CD4-positive, alpha-beta memory T cell (primary cell): ENCODE measurements at regions of chr11 and their contacts with region 1.

Region 1: DNA sequence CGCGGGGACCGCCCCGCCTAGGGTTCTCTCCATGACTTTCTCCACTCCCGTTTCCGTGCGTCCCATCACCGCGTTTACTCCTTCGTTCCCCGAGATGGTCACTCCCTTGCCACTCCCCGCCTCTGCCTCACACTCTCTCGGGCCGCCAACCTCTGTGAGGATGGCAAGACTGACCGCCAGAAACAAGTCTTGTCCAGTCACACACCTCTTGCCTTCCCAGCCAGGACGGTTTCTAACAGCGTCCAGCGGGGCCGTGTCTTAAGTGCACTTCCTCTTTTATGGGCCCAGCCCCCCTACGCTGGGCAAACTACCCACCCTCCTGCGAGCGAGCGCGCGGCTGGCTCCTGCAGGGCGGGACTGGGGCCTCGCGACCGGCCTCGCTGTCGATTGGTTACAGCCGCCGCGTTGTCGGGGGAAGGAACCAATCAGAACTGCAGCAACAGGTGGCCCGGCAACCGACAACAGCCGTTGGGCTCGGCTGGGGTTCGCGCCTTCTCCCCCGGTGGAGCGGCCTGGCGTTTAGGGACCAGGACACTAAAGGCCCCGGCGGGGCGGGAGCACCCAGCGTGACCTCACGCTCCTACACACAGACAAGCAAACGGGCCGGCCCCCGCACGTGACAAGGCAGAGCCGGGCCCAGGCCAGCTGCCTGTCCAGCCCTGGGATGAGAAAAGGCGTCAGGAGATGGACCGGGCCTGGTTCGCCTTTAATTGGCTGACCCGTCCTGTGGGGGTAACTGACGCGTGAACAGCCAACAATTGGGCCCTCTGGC is 512 bp upstream of the UCP2 start:
- DNase-seq: peak; percentile 91 to 95 (median 93)
- H3K4me3 ChIP-seq: peak overlapping the region; percentile 87 to 99
- H3K4me3 Mint-ChIP-seq: peak overlapping the region; percentile 96 to 99 (median 99)
- H3K27ac ChIP-seq: peak overlapping the region; percentile 84
- H3K27ac Mint-ChIP-seq: peak overlapping the region; percentile 98 to 100 (median 99)
- H3K4me1 ChIP-seq: peaks cover 42% of the 10 kb centered on the region
- H3K4me1 Mint-ChIP-seq: peaks cover 19 to 70% (median 29%) of the 10 kb centered on the region in 4 donors
- H3K27me3 ChIP-seq: no peaks in the 10 kb centered on the region
- H3K27me3 Mint-ChIP-seq: no peaks in the 10 kb centered on the region

Region 2: DNA sequence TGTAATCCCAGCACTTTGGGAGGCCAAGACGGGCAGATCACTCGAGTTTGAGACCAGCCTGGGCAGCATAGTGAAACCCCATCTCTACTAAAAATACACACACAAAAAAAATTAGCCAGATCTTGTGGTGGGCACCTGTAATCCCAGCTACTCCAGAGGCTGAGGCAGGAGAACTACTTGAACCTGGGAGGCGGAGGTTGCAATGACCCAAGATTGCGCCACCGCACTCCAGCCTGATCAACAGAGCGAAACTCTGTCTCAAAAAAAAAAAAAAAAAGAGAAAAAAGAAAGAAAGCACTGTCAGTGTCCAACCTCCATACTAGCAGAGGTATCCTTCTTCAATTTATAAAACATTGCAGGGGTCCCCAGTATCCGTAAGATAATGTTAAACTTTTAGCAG is 240.1 kb before region 1 on chr11:
- CTCF ChIA-PET with region 1: no interaction called
- POLR2A ChIA-PET with region 1: no interaction called
- intact Hi-C with region 1: no loop called
- DNase-seq: no peak
- H3K4me3 ChIP-seq: no peak overlapping the region
- H3K4me3 Mint-ChIP-seq: no peak overlapping the region
- H3K27ac ChIP-seq: no peak overlapping the region
- H3K27ac Mint-ChIP-seq: peak overlapping the region in 1 of 7 donors; percentile 54
- H3K4me1 ChIP-seq: peaks cover 3% of the 10 kb centered on the region
- H3K4me1 Mint-ChIP-seq: peaks cover 13 to 23% (median 20%) of the 10 kb centered on the region in 4 donors
- H3K27me3 ChIP-seq: no peaks in the 10 kb centered on the region
- H3K27me3 Mint-ChIP-seq: no peaks in the 10 kb centered on the region

Region 3: DNA sequence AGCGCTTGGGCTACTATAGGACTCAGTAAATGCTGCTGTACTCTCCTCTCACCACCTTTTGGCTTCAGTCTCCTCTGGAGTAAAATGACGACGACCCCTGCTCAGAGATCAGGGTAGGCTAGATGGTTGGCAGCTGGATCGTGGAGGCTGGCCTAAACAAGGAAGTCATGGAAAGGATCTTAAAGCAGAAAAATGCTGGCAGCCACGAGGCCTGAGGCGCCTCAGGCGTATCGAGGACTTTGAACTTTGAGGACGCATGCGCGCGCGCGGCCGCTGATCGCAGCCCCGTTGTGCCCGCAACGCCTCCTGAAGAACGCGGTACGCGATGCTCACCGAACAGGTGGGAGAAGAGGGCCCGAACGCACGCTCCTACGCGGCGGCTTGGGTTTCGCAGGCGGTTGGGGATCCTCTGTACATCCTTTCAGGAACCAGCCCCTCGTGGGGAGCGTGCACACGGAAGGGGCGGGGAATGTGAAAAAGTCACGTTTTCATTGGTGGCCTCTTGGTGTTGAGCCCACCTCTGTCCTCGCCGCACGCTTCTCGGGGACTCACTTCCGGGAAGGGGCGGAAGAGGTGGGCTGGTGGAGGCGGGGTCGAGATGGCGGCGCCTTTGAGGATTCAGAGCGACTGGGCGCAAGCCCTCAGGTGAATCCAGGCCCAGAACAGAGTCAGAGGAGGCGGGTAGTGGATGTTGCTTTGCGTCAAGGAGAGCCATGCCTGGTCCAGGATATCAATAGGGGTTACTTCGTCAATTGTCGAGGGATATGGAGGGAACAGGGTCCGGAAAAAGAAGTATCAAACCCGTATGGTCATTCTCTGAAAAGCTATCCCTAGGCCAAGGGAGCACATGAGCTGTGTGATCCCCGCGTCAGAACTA is 106.5 kb before region 1 on chr11 and contains the starts of genes COA4 and PAAF1:
- CTCF ChIA-PET with region 1: no interaction called
- POLR2A ChIA-PET with region 1: no interaction called
- intact Hi-C with region 1: loop called (anchors 5 kb)
- DNase-seq: peak; percentile 93 to 97 (median 94)
- H3K4me3 ChIP-seq: peak within 1 kb of the TSS; percentile 85 to 90
- H3K4me3 Mint-ChIP-seq: peak within 1 kb of the TSS; percentile 98 to 100 (median 100)
- H3K27ac ChIP-seq: peak within 1 kb of the TSS; percentile 86
- H3K27ac Mint-ChIP-seq: peak within 1 kb of the TSS; percentile 95 to 100 (median 99)
- H3K4me1 ChIP-seq: peaks cover 32% of the 10 kb centered on the region
- H3K4me1 Mint-ChIP-seq: peaks cover 16 to 50% (median 31%) of the 10 kb centered on the region in 4 donors
- H3K27me3 ChIP-seq: no peaks in the 10 kb centered on the region
- H3K27me3 Mint-ChIP-seq: no peaks in the 10 kb centered on the region
- total RNA-seq, gene COA4: 59.0 to 61.4 TPM
- total RNA-seq, gene PAAF1: 18.8 to 19.1 TPM

Region 4: GRCh38 chr11:73916435-73916834 is 66.7 kb before region 1 on chr11:
- CTCF ChIA-PET with region 1: no interaction called
- POLR2A ChIA-PET with region 1: no interaction called
- intact Hi-C with region 1: no loop called
- DNase-seq: no peak
- H3K4me3 ChIP-seq: no peak overlapping the region
- H3K4me3 Mint-ChIP-seq: no peak overlapping the region
- H3K27ac ChIP-seq: no peak overlapping the region
- H3K27ac Mint-ChIP-seq: peak overlapping the region in 1 of 7 donors; percentile 29
- H3K4me1 ChIP-seq: no peaks in the 10 kb centered on the region
- H3K4me1 Mint-ChIP-seq: peaks cover 0 to 2% (median 0%) of the 10 kb centered on the region in 4 donors
- H3K27me3 ChIP-seq: no peaks in the 10 kb centered on the region
- H3K27me3 Mint-ChIP-seq: no peaks in the 10 kb centered on the region

Region 5: GRCh38 chr11:73950869-73951710 is 32.1 kb before region 1 on chr11 and contains the start of gene DNAJB13:
- CTCF ChIA-PET with region 1: no interaction called
- POLR2A ChIA-PET with region 1: no interaction called
- intact Hi-C with region 1: no loop called
- DNase-seq: no peak
- H3K4me3 ChIP-seq: no peak within 1 kb of the TSS
- H3K4me3 Mint-ChIP-seq: no peak within 1 kb of the TSS
- H3K27ac ChIP-seq: no peak within 1 kb of the TSS
- H3K27ac Mint-ChIP-seq: no peak within 1 kb of the TSS
- H3K4me1 ChIP-seq: no peaks in the 10 kb centered on the region
- H3K4me1 Mint-ChIP-seq: no peaks in the 10 kb centered on the region
- H3K27me3 ChIP-seq: no peaks in the 10 kb centered on the region
- H3K27me3 Mint-ChIP-seq: peaks cover 3 to 5% of the 10 kb centered on the region in 2 donors
- total RNA-seq, gene DNAJB13: 0.23 to 0.30 TPM

Region 6: GRCh38 chr11:73965076-73965860 is 17.9 kb before region 1 on chr11:
- CTCF ChIA-PET with region 1: interaction called, 29 read pairs
- POLR2A ChIA-PET with region 1: interaction called, 623 read pairs
- intact Hi-C with region 1: loop called (anchors 2 kb)
- DNase-seq: no peak
- H3K4me3 ChIP-seq: no peak overlapping the region
- H3K4me3 Mint-ChIP-seq: peak overlapping the region in 1 of 8 donors; percentile 52
- H3K27ac ChIP-seq: no peak overlapping the region
- H3K27ac Mint-ChIP-seq: peak overlapping the region in 4 of 7 donors; percentile 37 to 48 (median 41)
- H3K4me1 ChIP-seq: peaks cover 45% of the 10 kb centered on the region
- H3K4me1 Mint-ChIP-seq: peaks cover 30 to 54% (median 39%) of the 10 kb centered on the region in 4 donors
- H3K27me3 ChIP-seq: no peaks in the 10 kb centered on the region
- H3K27me3 Mint-ChIP-seq: no peaks in the 10 kb centered on the region

Region 7: GRCh38 chr11:73995247-73995646 is 12.1 kb after region 1 on chr11:
- CTCF ChIA-PET with region 1: interaction called, 23 read pairs
- POLR2A ChIA-PET with region 1: interaction called, 2,221 read pairs
- intact Hi-C with region 1: loop called (anchors 1 kb)
- DNase-seq: peak; percentile 69 to 90 (median 87)
- H3K4me3 ChIP-seq: peak overlapping the region; percentile 8 to 25
- H3K4me3 Mint-ChIP-seq: peak overlapping the region; percentile 68 to 88 (median 82)
- H3K27ac ChIP-seq: peak overlapping the region; percentile 81
- H3K27ac Mint-ChIP-seq: peak overlapping the region; percentile 96 to 99 (median 98)
- H3K4me1 ChIP-seq: peaks cover 86% of the 10 kb centered on the region
- H3K4me1 Mint-ChIP-seq: peaks cover 48 to 83% (median 64%) of the 10 kb centered on the region in 4 donors
- H3K27me3 ChIP-seq: no peaks in the 10 kb centered on the region
- H3K27me3 Mint-ChIP-seq: no peaks in the 10 kb centered on the region

Region 8: GRCh38 chr11:74011360-74012073 is 28.4 kb after region 1 on chr11:
- CTCF ChIA-PET with region 1: interaction called, 38 read pairs
- POLR2A ChIA-PET with region 1: interaction called, 2,221 read pairs
- intact Hi-C with region 1: loop called (anchors 1 kb)
- DNase-seq: peak; percentile 62 to 76 (median 69)
- H3K4me3 ChIP-seq: peak overlapping the region; percentile 10 to 39
- H3K4me3 Mint-ChIP-seq: peak overlapping the region; percentile 41 to 87 (median 68)
- H3K27ac ChIP-seq: peak overlapping the region; percentile 73
- H3K27ac Mint-ChIP-seq: peak overlapping the region; percentile 94 to 99 (median 96)
- H3K4me1 ChIP-seq: peaks cover 100% of the 10 kb centered on the region
- H3K4me1 Mint-ChIP-seq: peaks cover 27 to 95% (median 77%) of the 10 kb centered on the region in 4 donors
- H3K27me3 ChIP-seq: no peaks in the 10 kb centered on the region
- H3K27me3 Mint-ChIP-seq: no peaks in the 10 kb centered on the region

Region 9: DNA sequence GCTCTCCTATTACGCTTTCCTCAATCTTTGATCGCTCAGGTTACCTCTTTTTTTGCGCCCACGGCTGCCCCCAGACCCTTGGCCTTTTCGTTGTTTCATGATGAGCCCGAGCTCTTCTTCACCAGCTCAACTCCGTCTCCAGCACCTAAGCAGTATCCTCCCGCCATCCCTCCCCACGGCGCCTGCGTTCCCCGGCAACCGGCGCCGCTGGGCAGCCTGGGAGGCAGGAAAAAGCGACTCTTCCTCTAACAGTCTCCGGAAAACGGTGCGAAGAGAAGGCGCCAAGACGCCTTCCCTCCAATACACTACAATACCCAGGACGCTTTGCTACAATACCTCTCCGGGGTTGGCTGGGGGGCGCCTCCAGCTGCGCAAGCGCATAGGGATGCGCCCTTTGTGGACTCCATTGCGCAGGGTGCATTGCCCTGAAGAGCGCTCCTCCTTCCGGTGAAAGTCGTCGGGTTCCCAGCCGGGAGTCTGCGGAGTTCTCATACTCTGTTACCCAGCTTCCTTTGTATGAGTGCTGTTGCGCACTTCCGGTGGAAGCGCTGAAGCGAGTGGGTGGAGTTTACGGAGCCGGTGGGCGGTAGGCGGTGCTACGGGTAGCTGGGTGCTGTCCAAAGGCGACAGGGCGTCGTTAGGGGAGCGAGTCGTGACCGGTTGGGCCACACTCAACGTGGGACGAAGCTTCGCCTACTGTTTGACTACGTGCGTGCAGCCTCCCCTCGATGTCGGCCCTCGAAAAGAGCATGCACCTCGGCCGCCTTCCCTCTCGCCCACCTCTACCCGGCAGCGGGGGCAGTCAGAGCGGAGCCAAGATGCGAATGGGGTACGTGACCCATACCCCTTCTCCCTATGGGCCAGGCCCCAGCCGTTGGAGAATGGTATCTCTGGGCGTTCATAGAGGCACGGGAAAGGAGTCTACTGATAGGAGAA is 187.8 kb after region 1 on chr11 and contains the starts of genes C2CD3 and PPME1:
- CTCF ChIA-PET with region 1: no interaction called
- POLR2A ChIA-PET with region 1: interaction called, 22 read pairs
- intact Hi-C with region 1: loop called (anchors 2 kb)
- DNase-seq: peak; percentile 97 to 99 (median 99)
- H3K4me3 ChIP-seq: peak within 1 kb of the TSS; percentile 74 to 86
- H3K4me3 Mint-ChIP-seq: no peak within 1 kb of the TSS
- H3K27ac ChIP-seq: peak within 1 kb of the TSS; percentile 70
- H3K27ac Mint-ChIP-seq: no peak within 1 kb of the TSS
- H3K4me1 ChIP-seq: peaks cover 40% of the 10 kb centered on the region
- H3K4me1 Mint-ChIP-seq: peaks cover 18 to 22% (median 18%) of the 10 kb centered on the region in 4 donors
- H3K27me3 ChIP-seq: no peaks in the 10 kb centered on the region
- H3K27me3 Mint-ChIP-seq: no peaks in the 10 kb centered on the region
- total RNA-seq, gene C2CD3: 41.9 to 52.7 TPM
- total RNA-seq, gene PPME1: 20.7 to 21.9 TPM

Region 10: GRCh38 chr11:74895340-74896116 is 912.4 kb after region 1 on chr11:
- CTCF ChIA-PET with region 1: no interaction called
- POLR2A ChIA-PET with region 1: no interaction called
- intact Hi-C with region 1: no loop called
- DNase-seq: no peak
- H3K4me3 ChIP-seq: no peak overlapping the region
- H3K4me3 Mint-ChIP-seq: no peak overlapping the region
- H3K27ac ChIP-seq: no peak overlapping the region
- H3K27ac Mint-ChIP-seq: peak overlapping the region in 1 of 7 donors; percentile 63
- H3K4me1 ChIP-seq: no peaks in the 10 kb centered on the region
- H3K4me1 Mint-ChIP-seq: peaks cover 0 to 18% (median 0%) of the 10 kb centered on the region in 4 donors
- H3K27me3 ChIP-seq: no peaks in the 10 kb centered on the region
- H3K27me3 Mint-ChIP-seq: no peaks in the 10 kb centered on the region